ENCODE measurements at regions of chr5 and their contacts with region 1.

Region 1: GRCh38 chr5:139262742-139263445 is 30.6 kb upstream of the MATR3 start:
- DNase-seq: peak; percentile 91
- ATAC-seq: peak; percentile 99

Region 2: GRCh38 chr5:138575194-138576015 is 687.5 kb before region 1 on chr5 and contains the start of gene HSPA9:
- intact Hi-C with region 1: loop called (anchors 2 kb)
- DNase-seq: peak; percentile 98
- ATAC-seq: peak; percentile 98
- total RNA-seq, gene HSPA9: 308 TPM

Region 3: DNA sequence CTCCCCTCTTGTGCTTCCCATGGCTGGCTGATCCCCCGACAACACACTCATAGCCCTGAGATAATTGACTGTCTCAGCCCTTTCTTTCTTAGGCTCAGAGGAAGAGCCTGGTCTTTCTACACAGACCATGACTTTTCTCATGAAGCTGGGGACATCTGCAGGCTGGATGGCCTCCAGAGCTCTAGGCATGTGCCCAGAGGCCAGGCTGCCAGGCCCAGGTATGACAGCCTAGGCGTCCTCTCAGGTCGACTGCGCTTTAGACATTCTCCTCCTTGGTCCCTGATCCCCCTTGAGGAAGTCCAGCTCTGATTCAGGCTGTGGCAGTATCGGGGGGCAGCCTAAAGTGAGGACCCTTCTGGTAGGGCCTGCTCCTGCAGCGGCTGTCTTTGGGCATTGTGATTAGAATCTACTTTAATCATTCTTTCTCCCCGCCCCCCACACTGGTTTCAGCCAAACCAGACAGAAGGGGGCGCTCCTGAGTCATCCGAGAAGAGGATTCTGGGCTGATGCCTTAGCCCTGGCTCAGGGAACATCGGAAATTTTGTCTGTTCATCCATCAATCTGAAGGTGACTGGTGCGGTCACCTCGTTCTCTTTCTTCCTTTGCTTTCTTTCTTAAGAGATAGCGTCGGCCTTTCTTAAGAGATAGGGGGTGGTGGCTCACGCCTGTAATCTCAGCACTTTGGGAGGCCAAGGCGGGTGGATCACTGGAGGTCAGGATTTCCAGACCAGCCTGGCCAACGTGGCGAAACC is 621.2 kb before region 1 on chr5:
- intact Hi-C with region 1: loop called (anchors 2 kb)
- DNase-seq: no peak
- ATAC-seq: peak; percentile 69

Region 4: GRCh38 chr5:139061274-139061673 is 201.6 kb before region 1 on chr5:
- intact Hi-C with region 1: no loop called
- DNase-seq: no peak
- ATAC-seq: peak; percentile 75

Region 5: DNA sequence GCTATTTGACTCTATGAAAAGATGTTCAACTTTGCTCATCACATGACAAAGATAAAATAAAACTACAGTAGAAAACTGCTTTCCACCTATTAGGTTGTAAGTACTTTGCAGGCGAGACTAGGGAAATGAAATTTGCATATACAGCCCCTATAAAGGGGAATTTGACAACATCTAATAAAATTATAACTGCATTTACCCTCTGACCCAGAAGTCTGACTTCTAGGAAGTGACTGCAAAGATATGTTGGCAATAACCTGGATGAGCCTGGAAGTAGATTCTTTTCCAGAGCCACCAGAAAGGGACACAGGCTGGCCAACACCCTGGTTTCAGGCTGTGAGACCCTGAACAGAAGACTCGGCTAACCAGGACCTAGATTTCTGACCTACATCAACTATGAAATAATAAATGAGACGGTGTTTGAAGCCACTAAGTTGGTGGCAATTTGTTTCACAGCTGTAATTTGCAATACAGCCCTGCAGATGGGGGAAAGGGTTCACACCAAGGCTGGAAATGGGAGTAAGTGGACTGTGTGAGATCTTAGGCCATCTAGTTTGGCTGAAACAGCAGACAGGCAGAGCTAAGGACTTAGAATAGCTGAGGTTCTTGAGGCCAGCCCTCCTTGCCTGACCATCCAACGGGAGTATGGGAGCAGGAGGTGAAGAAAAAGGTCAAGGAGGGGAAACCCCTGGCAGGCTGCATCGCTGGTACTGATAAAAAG is 171.3 kb before region 1 on chr5:
- intact Hi-C with region 1: loop called (anchors 2 kb)
- DNase-seq: no peak
- ATAC-seq: peak; percentile 88

Region 6: DNA sequence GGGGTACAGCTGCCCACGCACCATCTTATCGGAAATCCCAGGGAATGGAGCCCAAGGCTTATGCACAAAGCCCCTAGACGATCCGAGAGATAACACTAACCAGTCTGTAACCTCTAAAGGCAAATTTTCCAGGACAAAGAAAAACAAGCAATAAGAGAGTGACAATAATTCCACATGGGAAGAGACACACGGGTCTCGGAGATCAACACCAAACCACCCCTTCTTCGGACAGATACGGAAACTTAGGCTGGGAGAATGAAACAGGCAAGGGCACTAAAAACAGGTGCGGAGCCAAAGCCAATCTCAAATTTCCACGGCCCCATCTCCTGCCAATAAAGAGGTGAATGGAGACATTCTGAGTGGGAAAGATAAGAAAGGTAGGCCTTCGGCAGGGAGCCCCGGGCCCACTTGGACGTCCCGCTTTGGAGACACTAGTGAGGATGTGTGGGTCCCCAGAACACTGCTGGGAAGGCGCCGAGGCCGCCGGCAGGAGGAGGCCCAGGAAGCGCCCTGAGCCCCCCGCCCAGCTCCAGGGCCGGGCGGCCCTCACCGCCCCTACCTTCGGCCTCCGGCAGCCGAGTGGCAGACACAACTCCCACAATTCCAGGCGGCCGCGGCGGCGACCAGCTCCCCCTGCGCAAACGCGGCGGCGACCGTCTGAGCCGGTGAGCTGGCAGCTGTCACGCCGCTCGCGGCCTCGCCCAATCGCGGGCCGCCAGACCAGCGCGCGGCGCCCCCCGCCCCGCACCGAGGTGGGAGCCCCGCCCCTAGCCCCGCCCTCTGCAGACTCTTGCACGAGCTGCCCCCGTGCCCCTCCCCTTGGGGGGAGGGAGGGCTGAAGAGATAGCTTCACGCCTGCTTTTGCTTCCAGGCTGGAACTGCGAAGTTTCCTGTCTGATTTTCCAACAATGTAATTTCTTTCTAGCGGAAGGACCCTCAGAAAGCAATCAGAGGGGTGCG is 64.9 kb before region 1 on chr5 and contains the start of gene SIL1:
- intact Hi-C with region 1: loop called (anchors 5 kb)
- DNase-seq: peak; percentile 99
- ATAC-seq: peak; percentile 99
- total RNA-seq, gene SIL1: 46.2 TPM

Region 7: GRCh38 chr5:139222335-139222734 is 40.6 kb before region 1 on chr5:
- intact Hi-C with region 1: no loop called
- DNase-seq: no peak
- ATAC-seq: no peak

Region 8: DNA sequence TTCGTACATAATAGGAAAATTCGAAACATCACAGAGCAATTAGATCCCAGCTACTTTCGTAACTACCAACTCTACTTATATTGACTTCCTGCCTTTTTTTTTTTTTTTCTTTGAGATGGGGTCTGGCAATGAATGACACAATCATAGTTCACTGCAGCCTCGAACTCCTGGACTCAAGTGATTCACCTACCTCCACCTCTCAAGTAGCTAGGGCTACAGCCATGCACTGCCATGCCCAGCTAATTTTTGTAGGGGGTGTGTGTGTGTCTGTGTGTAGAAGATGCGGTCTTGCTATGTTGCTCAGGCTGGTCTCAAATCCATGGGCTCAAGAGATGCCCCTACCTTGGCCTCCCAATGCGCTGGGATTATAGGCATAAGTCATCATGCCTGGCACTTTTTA is 72.9 kb after region 1 on chr5:
- intact Hi-C with region 1: no loop called
- DNase-seq: no peak
- ATAC-seq: no peak